Activated naive CD4-positive, alpha-beta T cell treated with anti-CD3 and anti-CD28 coated beads for 36 hours (primary cell): ENCODE measurements at regions of chr11 and their contacts with region 1.

Region 1: GRCh38 chr11:123116486-123116885 is 54.5 kb upstream of the HSPA8 start:
- DNase-seq: no peak
- H3K4me3 Mint-ChIP-seq: no peak overlapping the region
- H3K27ac Mint-ChIP-seq: no peak overlapping the region
- H3K4me1 Mint-ChIP-seq: peaks cover 4% of the 10 kb centered on the region
- H3K27me3 Mint-ChIP-seq: no peaks in the 10 kb centered on the region

Region 2: DNA sequence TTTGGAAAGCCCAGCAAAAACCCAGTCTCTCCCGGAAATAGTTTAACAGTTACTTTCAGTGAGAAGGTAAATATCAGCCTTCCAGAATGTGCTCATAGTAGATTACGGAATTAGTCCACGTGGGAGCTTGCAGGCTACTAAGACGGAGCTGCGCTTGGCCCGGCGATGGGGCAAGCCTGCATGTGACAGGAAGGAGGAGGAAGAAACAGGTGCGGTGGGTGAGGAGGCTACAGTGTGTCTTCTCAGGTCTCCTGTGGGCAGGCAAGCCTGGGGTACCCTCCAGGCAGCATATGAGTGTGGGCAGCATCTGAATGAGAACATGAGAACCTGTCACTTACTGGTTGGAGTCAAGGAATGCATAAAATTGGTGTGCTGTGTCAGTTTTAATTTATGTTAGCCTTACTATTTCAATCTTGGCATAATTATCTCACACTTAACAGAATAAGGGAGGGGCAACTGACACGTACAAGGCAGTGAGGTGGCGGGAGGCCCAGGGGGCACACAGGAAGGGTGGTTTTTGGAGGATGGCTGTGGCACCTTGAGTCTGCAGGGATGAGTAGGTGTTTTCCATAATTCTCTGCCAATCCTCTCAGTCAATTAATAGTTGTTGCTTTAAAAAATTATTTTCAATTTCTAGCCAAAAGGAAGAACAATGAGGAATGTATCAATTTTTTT is 42.8 kb after region 1 on chr11:
- CTCF ChIA-PET with region 1: no interaction called
- intact Hi-C with region 1: loop called (anchors 5 kb)
- DNase-seq: peak; percentile 70
- H3K4me3 Mint-ChIP-seq: no peak overlapping the region
- H3K27ac Mint-ChIP-seq: peak overlapping the region; percentile 28
- H3K4me1 Mint-ChIP-seq: peaks cover 17% of the 10 kb centered on the region
- H3K27me3 Mint-ChIP-seq: no peaks in the 10 kb centered on the region